Activated CD8-positive, alpha-beta T cell treated with anti-CD3 and anti-CD28 coated beads, Interleukin-2, amount 10 ng/mL, durations not matched to agents 7 days and 5 days (primary cell): ENCODE measurements at regions of chrX and their contacts with region 1.

Region 1: GRCh38 chrX:119685225-119686066 is 7.5 kb downstream of the SEPTIN6 start:
- DNase-seq: peak; percentile 71
- ATAC-seq: peak; percentile 58
- H3K4me3 Mint-ChIP-seq: peak overlapping the region; percentile 92
- H3K27ac Mint-ChIP-seq: peak overlapping the region; percentile 99
- H3K4me1 Mint-ChIP-seq: peaks cover 69% of the 10 kb centered on the region
- H3K27me3 Mint-ChIP-seq: no peaks in the 10 kb centered on the region

Region 2: GRCh38 chrX:119669424-119670037 is 15.9 kb before region 1 on chrX:
- CTCF ChIA-PET with region 1: no interaction called
- POLR2A ChIA-PET with region 1: interaction called, 198 read pairs
- DNase-seq: no peak
- ATAC-seq: no peak
- H3K4me3 Mint-ChIP-seq: no peak overlapping the region
- H3K27ac Mint-ChIP-seq: no peak overlapping the region
- H3K4me1 Mint-ChIP-seq: peaks cover 26% of the 10 kb centered on the region
- H3K27me3 Mint-ChIP-seq: no peaks in the 10 kb centered on the region

Region 3: GRCh38 chrX:119738742-119739141 is 53.3 kb after region 1 on chrX:
- CTCF ChIA-PET with region 1: no interaction called
- POLR2A ChIA-PET with region 1: no interaction called
- DNase-seq: no peak
- ATAC-seq: no peak
- H3K4me3 Mint-ChIP-seq: no peak overlapping the region
- H3K27ac Mint-ChIP-seq: no peak overlapping the region
- H3K4me1 Mint-ChIP-seq: no peaks in the 10 kb centered on the region
- H3K27me3 Mint-ChIP-seq: no peaks in the 10 kb centered on the region